ENCODE measurements at regions of chr20 and their contacts with region 1.

Region 1: DNA sequence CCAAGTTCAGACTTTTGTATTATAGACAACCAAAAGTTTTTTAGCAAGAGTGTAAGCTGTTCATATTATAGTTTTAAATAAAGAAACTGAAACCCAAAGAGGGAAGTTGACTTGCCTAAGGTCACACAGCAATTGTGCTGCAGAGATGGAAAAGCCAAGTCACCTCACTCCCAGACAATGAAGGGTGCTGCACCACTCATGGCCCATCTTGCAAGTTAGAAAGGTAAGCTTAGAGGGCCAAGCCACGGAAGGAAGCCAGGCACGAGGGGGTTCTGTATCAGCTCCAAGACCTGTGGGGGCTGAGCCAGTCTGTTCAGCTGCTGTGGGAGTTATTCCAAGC is 860 bp downstream of the DEFB124 start:
- DNase-seq: no peak
- ATAC-seq: no peak
- H3K4me3 ChIP-seq: peak overlapping the region in 2 of 12 donors; percentile 78
- H3K27ac ChIP-seq: peak overlapping the region in 5 of 12 donors; percentile 76 to 91 (median 82)
- H3K4me1 ChIP-seq: peaks cover 0 to 29% (median 9%) of the 10 kb centered on the region in 12 donors
- H3K27me3 ChIP-seq: peaks cover 0 to 26% (median 19%) of the 10 kb centered on the region in 9 donors
- CTCF ChIP-seq: no peak
- POLR2A ChIP-seq: no peak

Region 2: GRCh38 chr20:31496761-31497295 is 22.8 kb after region 1 on chr20:
- intact Hi-C with region 1: loop called in 1 of 10 experiments (anchors 2 kb)
- DNase-seq: peak; percentile 79 to 90 (median 84)
- ATAC-seq: peak; percentile 81 to 94 (median 90)
- H3K4me3 ChIP-seq: peak overlapping the region in 4 of 12 donors; percentile 1 to 24 (median 14)
- H3K27ac ChIP-seq: peak overlapping the region; percentile 25 to 84 (median 67)
- H3K4me1 ChIP-seq: peaks cover 0 to 31% (median 19%) of the 10 kb centered on the region in 12 donors
- H3K27me3 ChIP-seq: peaks cover 0 to 5% (median 0%) of the 10 kb centered on the region in 9 donors
- CTCF ChIP-seq: peak in 1 of 12 donors; percentile 13
- POLR2A ChIP-seq: no peak

Measured in heart left ventricle (tissue), 16 donors.